PC-9 (cell line): ENCODE measurements at regions of chr6 and their contacts with region 1.

Region 1: DNA sequence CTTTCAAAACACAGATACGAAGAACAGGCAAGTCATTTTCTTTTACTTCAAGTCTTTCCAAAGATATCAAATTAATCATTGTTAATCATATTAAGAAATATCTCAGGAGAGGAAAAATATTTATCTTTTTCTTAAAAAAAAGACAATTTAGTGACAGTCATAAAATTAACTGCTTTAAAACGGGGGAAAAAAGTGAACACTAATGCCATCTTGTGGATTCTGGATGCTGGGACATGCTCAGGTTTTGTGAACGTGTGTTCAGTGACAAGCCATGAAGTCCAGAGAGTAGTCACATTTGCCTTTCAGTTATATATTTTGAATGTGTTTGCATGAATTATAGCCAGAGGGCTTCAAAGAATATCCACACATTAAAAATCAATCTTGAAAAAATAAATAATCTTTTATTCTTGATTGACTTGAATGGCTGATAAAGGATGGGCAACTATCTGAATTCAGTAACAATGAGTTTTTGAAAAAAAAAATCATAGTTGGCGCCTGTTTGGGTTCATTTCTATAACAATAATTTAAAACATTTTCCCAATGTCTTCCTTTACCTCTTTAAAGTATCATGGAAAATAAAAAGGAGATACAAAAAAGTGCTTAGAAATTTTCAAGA is 74.7 kb upstream of the NOX3 start:
- DNase-seq: no peak
- H3K4me3 ChIP-seq: no peak overlapping the region
- H3K27ac ChIP-seq: no peak overlapping the region
- H3K4me1 ChIP-seq: peaks cover 16% of the 10 kb centered on the region
- H3K27me3 ChIP-seq: no peaks in the 10 kb centered on the region
- CTCF ChIP-seq: peak; percentile 71

Region 2: GRCh38 chr6:155327326-155328073 is 202.8 kb before region 1 on chr6:
- CTCF ChIA-PET with region 1: no interaction called
- POLR2A ChIA-PET with region 1: no interaction called
- intact Hi-C with region 1: loop called (anchors 1 kb)
- DNase-seq: peak in 1 of 2 experiments; percentile 33
- H3K4me3 ChIP-seq: no peak overlapping the region
- H3K27ac ChIP-seq: no peak overlapping the region
- H3K4me1 ChIP-seq: no peaks in the 10 kb centered on the region
- H3K27me3 ChIP-seq: no peaks in the 10 kb centered on the region
- CTCF ChIP-seq: peak; percentile 89

Region 3: GRCh38 chr6:155498370-155498769 is 32.0 kb before region 1 on chr6:
- CTCF ChIA-PET with region 1: no interaction called
- POLR2A ChIA-PET with region 1: no interaction called
- intact Hi-C with region 1: no loop called
- DNase-seq: no peak
- H3K4me3 ChIP-seq: no peak overlapping the region
- H3K27ac ChIP-seq: no peak overlapping the region
- H3K4me1 ChIP-seq: peaks cover 14% of the 10 kb centered on the region
- H3K27me3 ChIP-seq: no peaks in the 10 kb centered on the region
- CTCF ChIP-seq: no peak

Region 4: GRCh38 chr6:155580904-155581303 is 50.6 kb after region 1 on chr6:
- CTCF ChIA-PET with region 1: no interaction called
- POLR2A ChIA-PET with region 1: no interaction called
- intact Hi-C with region 1: no loop called
- DNase-seq: no peak
- H3K4me3 ChIP-seq: no peak overlapping the region
- H3K27ac ChIP-seq: no peak overlapping the region
- H3K4me1 ChIP-seq: no peaks in the 10 kb centered on the region
- H3K27me3 ChIP-seq: no peaks in the 10 kb centered on the region
- CTCF ChIP-seq: no peak